Activated T-helper 2 cell treated with anti-CD3 and anti-CD28 coated beads, Interferon-gamma antibody, Interleukin-2, Interleukin-4, amounts not matched to agents 10 μg/mL and 5 μg/mL and 100 μg/mL, durations not matched to agents 14 hours and 24 hours and 36 hours (primary cell): ENCODE measurements at regions of chr3 and their contacts with region 1.

Region 1: DNA sequence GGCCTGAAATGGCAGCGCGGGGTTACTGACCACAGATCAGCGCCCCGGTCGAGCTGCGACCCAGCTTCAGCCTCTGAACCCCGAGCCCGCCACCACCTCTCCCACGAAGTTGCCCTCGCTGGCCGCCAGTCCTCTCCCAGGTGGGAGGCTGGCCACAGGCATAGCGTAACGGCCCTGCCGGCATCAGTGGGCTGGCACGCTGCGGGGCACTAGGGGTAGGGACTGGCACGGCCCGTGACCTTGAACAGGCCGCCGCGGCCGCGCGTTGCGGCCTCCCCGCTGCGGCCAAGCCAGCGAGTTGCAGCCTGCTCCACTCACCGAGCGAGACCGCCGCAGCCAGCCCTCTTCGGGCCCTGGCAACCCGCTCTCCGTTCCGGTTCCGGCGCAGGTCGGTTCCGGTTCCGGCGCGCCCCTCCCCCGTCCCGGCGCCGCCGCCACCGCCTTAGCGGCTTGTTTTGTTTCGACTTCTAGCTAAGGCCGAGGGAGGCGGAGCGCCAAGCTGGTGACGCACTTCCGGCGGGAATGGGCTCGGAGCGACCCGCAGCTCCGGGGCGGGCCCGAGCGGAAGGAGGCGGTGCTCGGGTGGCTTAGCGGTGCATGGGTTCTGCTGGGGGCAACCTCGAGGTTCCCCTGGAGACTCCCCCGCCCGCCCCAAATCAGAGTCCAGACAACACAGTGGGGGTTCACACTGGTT is at the start of gene USP19:
- DNase-seq: peak; percentile 93
- H3K4me3 Mint-ChIP-seq: peak within 1 kb of the TSS; percentile 88
- H3K27ac Mint-ChIP-seq: peak within 1 kb of the TSS; percentile 80
- H3K4me1 Mint-ChIP-seq: peaks cover 11% of the 10 kb centered on the region
- H3K27me3 Mint-ChIP-seq: no peaks in the 10 kb centered on the region
- total RNA-seq, gene USP19: 47.9 and 54.8 TPM in 2 replicates

Region 2: GRCh38 chr3:49104483-49105291 is 15.9 kb before region 1 on chr3 and contains the start of gene QARS1:
- intact Hi-C with region 1: loop called (anchors 1 kb)
- DNase-seq: peak; percentile 86
- H3K4me3 Mint-ChIP-seq: peak within 1 kb of the TSS; percentile 97
- H3K27ac Mint-ChIP-seq: peak within 1 kb of the TSS; percentile 93
- H3K4me1 Mint-ChIP-seq: peaks cover 18% of the 10 kb centered on the region
- H3K27me3 Mint-ChIP-seq: no peaks in the 10 kb centered on the region
- total RNA-seq, gene QARS1: 209 and 226 TPM in 2 replicates

Region 3: GRCh38 chr3:49133226-49133951 is 12.8 kb after region 1 on chr3:
- intact Hi-C with region 1: no loop called
- DNase-seq: no peak
- H3K4me3 Mint-ChIP-seq: no peak overlapping the region
- H3K27ac Mint-ChIP-seq: no peak overlapping the region
- H3K4me1 Mint-ChIP-seq: peaks cover 1% of the 10 kb centered on the region
- H3K27me3 Mint-ChIP-seq: peaks cover 10% of the 10 kb centered on the region

Region 4: DNA sequence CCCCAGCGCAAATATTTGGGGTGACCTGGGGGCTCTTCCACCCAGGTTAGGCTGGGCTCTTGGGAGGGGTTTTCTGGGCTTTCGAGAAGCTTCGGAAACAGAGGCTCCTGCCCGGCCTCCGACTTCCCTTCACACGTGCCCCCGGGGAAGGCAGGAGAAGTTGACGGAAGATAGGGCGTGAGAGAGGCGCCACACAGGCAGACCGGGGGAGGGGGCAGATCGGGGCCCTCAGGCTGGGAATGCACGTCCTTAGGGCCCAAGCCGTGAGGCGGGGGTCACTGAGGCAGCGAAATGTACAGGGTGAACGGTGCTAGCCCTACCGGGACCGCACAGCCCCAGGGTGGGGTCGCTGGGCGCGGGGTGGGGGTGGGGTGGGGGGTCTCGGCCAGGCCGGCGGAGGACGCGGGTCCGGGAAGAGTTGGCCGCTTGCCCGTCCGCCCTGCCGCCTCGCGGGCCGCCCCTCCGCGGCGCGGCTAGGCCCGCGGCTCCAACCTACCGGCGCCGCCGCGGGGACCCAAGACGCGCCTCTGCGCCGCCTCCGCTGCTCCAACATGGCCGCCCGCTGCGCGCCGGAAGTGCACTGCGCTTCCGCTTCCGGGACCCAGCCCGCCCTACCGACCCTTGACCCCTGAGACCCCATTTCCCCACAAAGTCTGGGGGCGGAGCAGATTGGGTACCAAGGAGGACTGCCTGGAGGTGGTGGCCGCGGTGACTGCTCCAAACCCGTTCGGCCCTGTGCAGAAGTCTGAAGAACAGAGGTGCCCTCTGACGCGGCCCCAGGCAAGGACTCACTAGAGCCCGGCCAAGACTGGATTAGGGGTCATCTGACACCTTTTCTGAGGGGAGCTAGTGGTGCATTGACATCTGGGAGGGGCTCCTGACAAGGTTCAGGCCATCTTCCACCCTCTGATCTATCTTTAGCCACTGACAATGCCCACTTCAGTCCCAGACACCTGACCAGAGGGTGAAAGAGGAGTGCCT is 45.5 kb after region 1 on chr3 and contains the start of gene CCDC71:
- intact Hi-C with region 1: loop called (anchors 5 kb)
- DNase-seq: peak; percentile 72
- H3K4me3 Mint-ChIP-seq: peak within 1 kb of the TSS; percentile 93
- H3K27ac Mint-ChIP-seq: peak within 1 kb of the TSS; percentile 85
- H3K4me1 Mint-ChIP-seq: peaks cover 24% of the 10 kb centered on the region
- H3K27me3 Mint-ChIP-seq: no peaks in the 10 kb centered on the region
- total RNA-seq, gene CCDC71: 24.4 and 24.9 TPM in 2 replicates